ENCODE measurements at regions of chr9 and their contacts with region 1.

Region 1: GRCh38 chr9:111399772-111400563 is 69.9 kb upstream of the OR2K2 start:
- DNase-seq: peak; percentile 56
- H3K4me3 ChIP-seq: no peak overlapping the region
- H3K27ac ChIP-seq: no peak overlapping the region
- H3K4me1 ChIP-seq: no peaks in the 10 kb centered on the region
- H3K27me3 ChIP-seq: no peaks in the 10 kb centered on the region
- CTCF ChIP-seq: peak; percentile 59 to 88

Region 2: GRCh38 chr9:111330124-111330523 is 69.8 kb before region 1 on chr9 and contains the start of gene OR2K2:
- CTCF ChIA-PET with region 1: no interaction called
- dilution Hi-C with region 1: no loop called
- in situ Hi-C with region 1: no loop called
- intact Hi-C with region 1: loop called (anchors 10 kb)
- DNase-seq: no peak
- H3K4me3 ChIP-seq: no peak within 1 kb of the TSS
- H3K27ac ChIP-seq: no peak within 1 kb of the TSS
- H3K4me1 ChIP-seq: no peaks in the 10 kb centered on the region
- H3K27me3 ChIP-seq: peaks cover 6% of the 10 kb centered on the region
- CTCF ChIP-seq: no peak
- total RNA-seq, gene OR2K2: not detected